ENCODE measurements at regions of chr19 and their contacts with region 1.

Region 1: DNA sequence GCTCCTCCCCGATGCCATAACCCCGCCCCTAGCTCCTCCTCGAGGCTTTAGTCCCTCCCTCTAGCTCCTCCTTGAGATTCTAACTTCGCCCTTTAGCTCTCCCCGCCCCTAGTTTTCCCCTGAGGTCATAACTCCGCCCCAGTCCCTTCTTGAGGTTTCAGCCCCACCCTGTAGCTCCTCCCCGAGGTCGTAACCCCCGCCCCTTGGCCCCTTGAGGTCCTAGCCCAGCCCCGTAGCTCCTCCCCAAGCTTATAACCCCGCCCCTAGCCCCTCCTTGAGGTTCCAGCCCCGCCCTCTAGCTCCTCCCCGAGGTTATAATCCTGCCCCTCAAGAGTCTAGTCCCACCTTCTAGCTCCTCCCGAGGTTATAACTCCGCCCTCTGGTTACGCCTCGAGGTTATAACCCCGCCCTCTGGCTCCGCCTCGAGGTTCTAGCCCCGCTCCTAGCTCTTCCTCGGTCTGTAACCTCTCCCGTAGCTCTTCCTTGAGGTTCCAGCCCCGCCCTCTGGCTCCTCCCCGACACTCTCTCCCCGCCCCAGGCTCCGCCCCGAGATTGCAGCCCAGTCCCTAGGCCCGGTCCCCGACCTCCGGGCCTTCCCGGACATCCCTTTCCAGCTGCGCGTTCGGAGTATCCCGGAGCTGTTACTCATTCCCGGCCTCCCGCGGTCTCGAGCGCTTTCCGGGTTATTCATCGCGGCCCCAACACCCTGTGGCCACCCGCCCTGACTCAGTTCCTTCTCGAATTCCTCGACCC is 1.4 kb downstream of the PLAUR start:
- H3K4me3 ChIP-seq: peak overlapping the region; percentile 19
- H3K27ac ChIP-seq: peak overlapping the region; percentile 56
- H3K4me1 ChIP-seq: peaks cover 42% of the 10 kb centered on the region
- CTCF ChIP-seq: no peak

Region 2: GRCh38 chr19:43595999-43596841 is 72.4 kb before region 1 on chr19 and contains the starts of genes IRGQ and ZNF576:
- CTCF ChIA-PET with region 1: interaction called, 8 read pairs
- POLR2A ChIA-PET with region 1: interaction called, 49 read pairs
- H3K4me3 ChIP-seq: peak within 1 kb of the TSS; percentile 54
- H3K27ac ChIP-seq: peak within 1 kb of the TSS; percentile 95
- H3K4me1 ChIP-seq: peaks cover 24% of the 10 kb centered on the region
- CTCF ChIP-seq: peak; percentile 99

Region 3: DNA sequence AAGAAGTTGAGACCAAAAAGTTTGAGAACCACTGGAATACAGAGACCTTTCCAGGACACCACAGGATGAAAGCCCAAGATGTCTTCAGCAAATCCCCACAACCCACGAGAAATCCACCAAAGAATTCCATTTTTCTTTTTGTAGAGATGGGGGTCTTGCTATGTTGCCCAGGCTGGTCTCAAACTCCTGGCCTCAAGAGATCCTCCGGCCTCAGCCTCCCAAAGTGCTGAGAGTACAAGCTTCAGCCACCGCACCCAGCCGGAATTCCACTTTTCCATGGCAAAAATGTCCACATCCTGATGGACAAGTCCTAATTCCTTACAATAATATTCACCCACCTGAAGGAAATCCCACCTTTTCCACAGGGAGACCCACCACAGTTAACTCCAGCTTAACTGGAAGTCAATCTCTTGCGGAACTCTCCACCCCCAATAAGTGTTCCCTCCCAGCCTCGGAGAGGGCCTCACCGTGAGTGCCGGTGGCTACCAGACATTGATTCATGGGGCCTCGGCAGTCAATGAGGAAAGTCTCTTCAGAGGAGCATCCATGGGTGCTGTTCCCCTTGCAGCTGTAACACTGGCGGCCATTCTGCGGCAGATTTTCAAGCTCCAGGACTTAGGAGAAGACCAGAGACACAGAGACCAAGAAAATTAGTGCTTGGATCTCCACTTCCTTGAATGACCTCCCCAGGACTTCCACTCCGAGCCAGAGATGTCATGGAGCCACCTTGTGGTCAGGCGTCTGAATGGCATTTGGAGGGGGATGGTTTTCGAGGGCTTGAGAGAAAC is 16.6 kb before region 1 on chr19:
- CTCF ChIA-PET with region 1: interaction called, 52 read pairs
- POLR2A ChIA-PET with region 1: interaction called, 14 read pairs
- H3K4me3 ChIP-seq: no peak overlapping the region
- H3K27ac ChIP-seq: 0 out of 2 replicates have a peak overlapping the region, but pooled peaks have one; percentile 1
- H3K4me1 ChIP-seq: peaks cover 3% of the 10 kb centered on the region
- CTCF ChIP-seq: peak; percentile 94

Region 4: DNA sequence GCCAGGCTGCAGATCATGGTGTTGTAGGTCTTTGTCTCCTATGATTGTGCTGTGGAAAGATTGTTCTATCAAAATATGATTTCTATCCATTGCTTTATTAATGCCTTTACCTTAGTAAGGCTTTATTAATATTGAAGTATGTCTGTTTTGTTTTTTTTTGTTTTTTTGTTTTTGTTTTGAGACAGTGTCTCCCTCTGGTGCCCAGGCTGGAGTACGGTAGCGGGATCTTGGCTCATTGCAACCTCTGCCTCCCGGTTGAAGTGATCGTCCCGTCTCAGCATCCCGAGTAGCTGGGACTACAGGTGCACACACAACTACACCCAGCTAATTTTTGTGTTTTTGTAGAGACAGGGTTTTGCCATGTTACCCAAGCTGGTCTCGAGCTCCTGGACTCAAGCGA is 55.0 kb after region 1 on chr19:
- CTCF ChIA-PET with region 1: interaction called, 36 read pairs
- POLR2A ChIA-PET with region 1: interaction called, 15 read pairs
- H3K4me3 ChIP-seq: no peak overlapping the region
- H3K27ac ChIP-seq: no peak overlapping the region
- H3K4me1 ChIP-seq: no peaks in the 10 kb centered on the region
- CTCF ChIP-seq: peak; percentile 53

Region 5: DNA sequence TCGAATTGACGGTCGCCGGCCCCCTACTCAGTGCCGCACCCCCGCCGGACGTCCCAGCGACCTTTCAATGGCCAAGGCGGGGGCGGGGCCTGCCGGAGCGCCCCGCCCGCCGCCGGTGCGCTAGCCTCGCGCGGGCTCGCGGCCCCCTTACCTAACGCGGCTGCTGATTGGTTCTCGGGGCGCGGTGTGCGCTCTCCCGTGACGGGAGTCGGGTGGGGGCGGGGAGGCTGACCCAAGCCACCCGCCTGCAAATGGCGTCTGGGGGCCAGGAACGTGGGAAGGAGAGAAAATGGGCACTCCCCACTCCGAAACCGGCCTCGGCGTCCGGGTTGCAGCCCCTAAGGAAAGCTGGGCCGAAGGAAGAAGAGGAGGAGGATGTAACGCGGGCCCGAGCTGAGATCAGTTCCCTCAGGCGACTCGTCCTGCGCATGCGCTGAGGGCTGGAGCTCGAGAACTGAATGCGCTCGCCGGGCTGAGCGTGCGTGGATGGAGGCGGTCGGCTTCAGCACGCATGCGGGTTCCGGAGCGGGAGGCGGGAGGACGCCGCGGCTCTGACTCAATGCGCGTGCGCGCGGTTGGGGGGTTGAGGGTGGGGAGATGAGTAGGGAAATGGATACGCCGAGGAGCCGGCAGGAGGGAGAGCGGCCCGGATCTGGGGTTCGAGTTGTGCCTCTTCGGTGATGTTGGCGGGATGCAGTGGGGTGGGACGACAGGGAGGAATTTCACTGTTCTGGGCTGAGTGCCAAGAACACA is 86.1 kb after region 1 on chr19 and contains the start of gene SMG9:
- CTCF ChIA-PET with region 1: interaction called, 6 read pairs
- POLR2A ChIA-PET with region 1: interaction called, 63 read pairs
- H3K4me3 ChIP-seq: peak within 1 kb of the TSS; percentile 60
- H3K27ac ChIP-seq: peak within 1 kb of the TSS; percentile 100
- H3K4me1 ChIP-seq: peaks cover 32% of the 10 kb centered on the region
- CTCF ChIP-seq: no peak; the same call in 1 of the 2 replicates